ENCODE measurements at regions of chr16 and their contacts with region 1.

Region 1: GRCh38 chr16:23040246-23040645 is 109.0 kb downstream of the USP31 start:
- DNase-seq: no peak
- H3K4me3 ChIP-seq: no peak overlapping the region
- H3K27ac ChIP-seq: no peak overlapping the region
- H3K4me1 ChIP-seq: no peaks in the 10 kb centered on the region
- H3K27me3 ChIP-seq: no peaks in the 10 kb centered on the region
- CTCF ChIP-seq: no peak
- POLR2A ChIP-seq: no peak

Region 2: DNA sequence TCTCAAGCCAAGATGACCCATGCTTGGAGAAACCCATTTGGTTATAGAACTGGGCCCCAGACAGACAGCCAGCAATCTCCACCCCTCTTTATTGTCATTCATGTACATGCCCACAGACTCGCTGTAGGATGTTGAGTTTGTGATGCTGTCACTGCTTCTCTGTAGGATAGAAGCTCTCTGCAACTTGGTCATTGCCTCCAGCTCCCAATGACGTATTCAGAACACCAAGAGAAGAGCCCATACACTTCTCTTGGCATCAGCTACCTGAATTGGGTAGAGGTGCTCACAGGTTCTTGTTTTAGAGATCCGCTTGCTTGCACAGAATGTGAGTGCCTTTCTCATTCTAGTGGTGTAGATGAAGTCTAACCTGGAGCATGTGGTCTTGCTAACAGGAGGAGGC is 210.2 kb before region 1 on chr16:
- intact Hi-C with region 1: no loop called
- DNase-seq: no peak
- H3K4me3 ChIP-seq: no peak overlapping the region
- H3K27ac ChIP-seq: no peak overlapping the region
- H3K4me1 ChIP-seq: no peaks in the 10 kb centered on the region
- H3K27me3 ChIP-seq: no peaks in the 10 kb centered on the region
- CTCF ChIP-seq: no peak
- POLR2A ChIP-seq: no peak

Region 3: GRCh38 chr16:22915003-22915402 is 125.2 kb before region 1 on chr16:
- intact Hi-C with region 1: loop called (anchors 5 kb)
- DNase-seq: no peak
- H3K4me3 ChIP-seq: no peak overlapping the region
- H3K27ac ChIP-seq: no peak overlapping the region
- H3K4me1 ChIP-seq: no peaks in the 10 kb centered on the region
- H3K27me3 ChIP-seq: no peaks in the 10 kb centered on the region
- CTCF ChIP-seq: no peak
- POLR2A ChIP-seq: no peak

Region 4: GRCh38 chr16:22961206-22961605 is 79.0 kb before region 1 on chr16:
- intact Hi-C with region 1: no loop called
- DNase-seq: no peak
- H3K4me3 ChIP-seq: no peak overlapping the region
- H3K27ac ChIP-seq: no peak overlapping the region
- H3K4me1 ChIP-seq: no peaks in the 10 kb centered on the region
- H3K27me3 ChIP-seq: no peaks in the 10 kb centered on the region
- CTCF ChIP-seq: no peak
- POLR2A ChIP-seq: no peak